T-cell (primary cell): ENCODE measurements at regions of chr7 and their contacts with region 1.

Region 1: GRCh38 chr7:99386584-99387238 is 12.2 kb downstream of the ARPC1B start:
- DNase-seq: peak in 19 of 35 experiments; percentile 19 to 68 (median 32)
- ATAC-seq: peak; percentile 52 to 83 (median 78)
- H3K4me3 ChIP-seq: no peak overlapping the region
- H3K4me3 Mint-ChIP-seq: no peak overlapping the region
- H3K27ac ChIP-seq: no peak overlapping the region
- H3K27ac Mint-ChIP-seq: peak overlapping the region; percentile 5 to 77
- H3K4me1 ChIP-seq: peaks cover 2 to 47% of the 10 kb centered on the region in 2 experiments
- H3K4me1 Mint-ChIP-seq: peaks cover 16 to 26% (median 18%) of the 10 kb centered on the region in 3 donors
- H3K27me3 ChIP-seq: no peaks in the 10 kb centered on the region
- H3K27me3 Mint-ChIP-seq: no peaks in the 10 kb centered on the region

Region 2: GRCh38 chr7:99404235-99404966 is 17.7 kb after region 1 on chr7:
- CTCF ChIA-PET with region 1: interaction called, 3 to 4 read pairs
- POLR2A ChIA-PET with region 1: interaction called, 5 to 10 read pairs
- DNase-seq: no peak
- ATAC-seq: no peak
- H3K4me3 ChIP-seq: no peak overlapping the region
- H3K4me3 Mint-ChIP-seq: no peak overlapping the region
- H3K27ac ChIP-seq: no peak overlapping the region
- H3K27ac Mint-ChIP-seq: peak overlapping the region; percentile 24 to 57
- H3K4me1 ChIP-seq: peaks cover 11 to 41% of the 10 kb centered on the region in 2 experiments
- H3K4me1 Mint-ChIP-seq: peaks cover 31 to 46% (median 44%) of the 10 kb centered on the region in 3 donors
- H3K27me3 ChIP-seq: no peaks in the 10 kb centered on the region
- H3K27me3 Mint-ChIP-seq: no peaks in the 10 kb centered on the region